Psoas muscle (tissue), 8 donors: ENCODE measurements at regions of chr12 and their contacts with region 1.

Region 1: DNA sequence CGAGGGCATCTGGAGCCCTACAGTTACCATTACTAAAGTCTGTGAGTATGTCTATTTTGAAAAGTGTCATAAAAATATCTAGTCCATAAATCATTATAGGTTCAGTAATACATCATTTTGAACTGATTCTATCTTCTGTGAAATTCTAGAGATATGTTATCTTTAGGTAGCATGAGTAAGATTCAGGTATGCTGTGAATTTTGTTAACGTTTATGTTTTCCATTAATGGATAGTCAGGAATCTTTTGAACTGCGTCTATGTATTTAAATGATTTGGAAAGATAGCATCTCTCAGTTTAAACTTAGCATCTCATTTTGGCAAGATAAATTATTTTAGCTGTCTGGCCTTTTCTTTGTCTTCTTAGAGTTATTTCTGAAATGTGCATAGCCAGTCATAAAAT is 8.3 kb downstream of the ALG10B start:
- DNase-seq: no peak
- ATAC-seq: no peak
- H3K4me3 ChIP-seq: no peak overlapping the region
- H3K27ac ChIP-seq: no peak overlapping the region
- H3K4me1 ChIP-seq: no peaks in the 10 kb centered on the region
- H3K27me3 ChIP-seq: no peaks in the 10 kb centered on the region
- CTCF ChIP-seq: no peak

Region 2: GRCh38 chr12:39103552-39104165 is 778.8 kb after region 1 on chr12:
- intact Hi-C with region 1: loop called in 1 of 2 experiments (anchors 5 kb)
- DNase-seq: no peak
- ATAC-seq: peak in 3 of 4 donors; percentile 50 to 73 (median 65)
- H3K4me3 ChIP-seq: no peak overlapping the region
- H3K27ac ChIP-seq: no peak overlapping the region
- H3K4me1 ChIP-seq: no peaks in the 10 kb centered on the region
- H3K27me3 ChIP-seq: no peaks in the 10 kb centered on the region
- CTCF ChIP-seq: peak; percentile 58

Region 3: DNA sequence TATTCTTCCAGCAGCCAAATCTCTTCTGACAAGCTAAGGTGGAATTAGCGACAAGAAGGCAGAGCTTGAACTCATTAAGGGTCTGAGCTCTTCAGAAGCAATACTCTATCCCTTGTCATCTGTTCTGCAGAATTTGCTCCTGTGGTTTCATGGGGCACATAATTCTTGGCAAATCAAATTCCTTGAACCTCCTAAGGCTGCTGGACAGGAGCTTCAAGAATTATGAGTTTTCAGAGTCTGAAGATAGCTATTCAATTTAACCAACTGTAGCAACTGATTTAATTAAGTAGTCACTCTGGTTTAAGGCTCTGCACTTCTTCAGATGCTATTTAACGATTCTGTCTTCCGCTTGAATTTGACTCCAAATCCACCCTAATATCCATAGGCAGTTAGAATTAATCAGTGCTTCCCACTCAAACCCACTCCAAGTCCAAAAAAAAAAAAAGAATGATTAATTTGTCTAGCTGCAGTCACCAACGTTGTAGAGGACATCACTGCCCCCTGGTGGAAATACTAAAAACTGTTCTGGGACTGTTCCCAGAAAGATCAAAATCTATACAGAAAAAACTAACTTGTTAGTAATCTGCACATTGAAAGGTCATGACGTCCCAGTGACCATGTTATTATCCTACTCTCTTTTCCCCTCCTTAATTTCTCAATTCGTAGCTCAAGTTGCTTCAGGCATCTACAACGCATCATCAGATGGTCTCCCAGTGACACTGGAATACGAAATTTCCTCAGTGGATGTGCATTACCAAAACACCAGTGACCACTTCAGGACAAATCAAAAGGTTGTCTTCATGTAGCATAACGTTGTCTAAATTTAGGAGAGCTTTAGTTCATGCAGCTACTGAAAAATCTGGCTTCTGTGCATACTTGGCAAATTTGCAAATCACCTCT is 948.2 kb after region 1 on chr12:
- intact Hi-C with region 1: loop called (anchors 5 to 10 kb)
- DNase-seq: no peak
- ATAC-seq: no peak
- H3K4me3 ChIP-seq: no peak overlapping the region
- H3K27ac ChIP-seq: no peak overlapping the region
- H3K4me1 ChIP-seq: no peaks in the 10 kb centered on the region
- H3K27me3 ChIP-seq: no peaks in the 10 kb centered on the region
- CTCF ChIP-seq: peak; percentile 56